ENCODE measurements at regions of chr3 and their contacts with region 1.

Region 1: GRCh38 chr3:122679085-122679881 is 1.4 kb upstream of the PARP14 start:
- DNase-seq: peak; percentile 71 to 92 (median 78)
- ATAC-seq: peak; percentile 68
- H3K4me3 ChIP-seq: peak overlapping the region; percentile 93
- H3K4me3 Mint-ChIP-seq: peak overlapping the region; percentile 93
- H3K27ac ChIP-seq: peak overlapping the region; percentile 88 to 91
- H3K27ac Mint-ChIP-seq: peak overlapping the region; percentile 96
- H3K4me1 ChIP-seq: peaks cover 46% of the 10 kb centered on the region
- H3K4me1 Mint-ChIP-seq: peaks cover 54% of the 10 kb centered on the region
- H3K27me3 ChIP-seq: no peaks in the 10 kb centered on the region
- H3K27me3 Mint-ChIP-seq: no peaks in the 10 kb centered on the region
- CTCF ChIP-seq: peak; percentile 83

Region 2: GRCh38 chr3:121606106-121606505 is 1073.2 kb before region 1 on chr3:
- CTCF ChIA-PET with region 1: no interaction called
- POLR2A ChIA-PET with region 1: no interaction called
- intact Hi-C with region 1: no loop called
- DNase-seq: no peak
- ATAC-seq: no peak
- H3K4me3 ChIP-seq: no peak overlapping the region
- H3K4me3 Mint-ChIP-seq: no peak overlapping the region
- H3K27ac ChIP-seq: no peak overlapping the region
- H3K27ac Mint-ChIP-seq: no peak overlapping the region
- H3K4me1 ChIP-seq: no peaks in the 10 kb centered on the region
- H3K4me1 Mint-ChIP-seq: no peaks in the 10 kb centered on the region
- H3K27me3 ChIP-seq: no peaks in the 10 kb centered on the region
- H3K27me3 Mint-ChIP-seq: no peaks in the 10 kb centered on the region
- CTCF ChIP-seq: no peak

Region 3: DNA sequence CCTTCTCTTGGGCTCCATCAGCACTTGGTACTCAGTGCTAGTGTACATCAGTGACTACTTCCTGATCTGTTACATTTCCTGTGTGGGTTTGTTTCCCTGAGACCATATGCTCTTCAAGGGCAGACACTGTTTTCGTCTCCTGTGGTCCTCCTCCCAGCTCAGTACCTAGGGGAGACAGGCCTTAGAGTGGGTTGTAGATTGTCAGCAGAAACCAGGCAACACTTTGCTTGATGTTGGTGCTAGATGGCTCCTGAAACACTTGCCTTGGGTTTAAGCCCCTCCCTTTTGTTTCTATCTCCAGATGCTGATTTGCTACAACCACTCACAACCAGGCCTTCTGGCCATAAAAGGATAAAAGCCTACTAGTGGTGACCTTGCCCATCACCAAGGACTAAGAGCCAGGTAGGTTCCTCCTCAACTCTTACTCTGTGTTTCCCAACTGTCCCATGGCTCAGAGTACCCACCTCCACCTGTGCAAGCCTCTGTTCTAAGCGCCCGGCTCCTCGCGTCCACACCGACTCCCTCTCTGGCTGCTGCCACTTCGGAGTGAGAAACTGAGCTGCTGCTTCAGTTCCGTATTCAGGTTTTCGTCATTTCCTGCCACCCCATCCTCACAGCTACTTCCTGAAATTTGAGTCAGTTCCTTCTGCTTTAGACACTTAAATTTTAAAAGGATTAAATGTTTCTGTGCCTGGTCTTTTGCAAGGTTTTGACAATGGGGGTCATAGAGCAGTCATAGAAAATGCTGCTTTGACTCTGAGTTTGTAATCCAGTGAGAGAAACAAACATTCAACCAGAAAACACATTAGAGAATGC is 1018.7 kb before region 1 on chr3 and contains the start of gene HCLS1:
- CTCF ChIA-PET with region 1: no interaction called
- POLR2A ChIA-PET with region 1: no interaction called
- intact Hi-C with region 1: loop called in 1 of 2 experiments (anchors 10 kb)
- DNase-seq: peak; percentile 46 to 89 (median 62)
- ATAC-seq: peak; percentile 83
- H3K4me3 ChIP-seq: peak within 1 kb of the TSS; percentile 61
- H3K4me3 Mint-ChIP-seq: peak within 1 kb of the TSS; percentile 94
- H3K27ac ChIP-seq: peak within 1 kb of the TSS; percentile 83 to 97
- H3K27ac Mint-ChIP-seq: peak within 1 kb of the TSS; percentile 96
- H3K4me1 ChIP-seq: peaks cover 48% of the 10 kb centered on the region
- H3K4me1 Mint-ChIP-seq: peaks cover 55% of the 10 kb centered on the region
- H3K27me3 ChIP-seq: no peaks in the 10 kb centered on the region
- H3K27me3 Mint-ChIP-seq: no peaks in the 10 kb centered on the region
- CTCF ChIP-seq: no peak
- total RNA-seq, gene HCLS1: 204 to 206 TPM

Region 4: GRCh38 chr3:122101646-122102045 is 577.6 kb before region 1 on chr3:
- CTCF ChIA-PET with region 1: no interaction called
- POLR2A ChIA-PET with region 1: no interaction called
- intact Hi-C with region 1: loop called in 1 of 2 experiments (anchors 10 kb)
- DNase-seq: peak in 4 of 14 experiments; percentile 11 to 76 (median 74)
- ATAC-seq: no peak
- H3K4me3 ChIP-seq: no peak overlapping the region
- H3K4me3 Mint-ChIP-seq: no peak overlapping the region
- H3K27ac ChIP-seq: no peak overlapping the region
- H3K27ac Mint-ChIP-seq: no peak overlapping the region
- H3K4me1 ChIP-seq: peaks cover 4% of the 10 kb centered on the region
- H3K4me1 Mint-ChIP-seq: peaks cover 16% of the 10 kb centered on the region
- H3K27me3 ChIP-seq: no peaks in the 10 kb centered on the region
- H3K27me3 Mint-ChIP-seq: no peaks in the 10 kb centered on the region
- CTCF ChIP-seq: peak; percentile 41

Region 5: GRCh38 chr3:122392868-122393844 is 286.1 kb before region 1 on chr3:
- CTCF ChIA-PET with region 1: interaction called, 16 read pairs
- POLR2A ChIA-PET with region 1: interaction called, 23 read pairs
- intact Hi-C with region 1: loop called (anchors 1 to 2 kb)
- DNase-seq: peak in 5 of 14 experiments; percentile 5 to 68 (median 64)
- ATAC-seq: peak; percentile 55
- H3K4me3 ChIP-seq: no peak overlapping the region
- H3K4me3 Mint-ChIP-seq: no peak overlapping the region
- H3K27ac ChIP-seq: no peak overlapping the region
- H3K27ac Mint-ChIP-seq: no peak overlapping the region
- H3K4me1 ChIP-seq: no peaks in the 10 kb centered on the region
- H3K4me1 Mint-ChIP-seq: peaks cover 10% of the 10 kb centered on the region
- H3K27me3 ChIP-seq: no peaks in the 10 kb centered on the region
- H3K27me3 Mint-ChIP-seq: no peaks in the 10 kb centered on the region
- CTCF ChIP-seq: peak; percentile 81

Region 6: DNA sequence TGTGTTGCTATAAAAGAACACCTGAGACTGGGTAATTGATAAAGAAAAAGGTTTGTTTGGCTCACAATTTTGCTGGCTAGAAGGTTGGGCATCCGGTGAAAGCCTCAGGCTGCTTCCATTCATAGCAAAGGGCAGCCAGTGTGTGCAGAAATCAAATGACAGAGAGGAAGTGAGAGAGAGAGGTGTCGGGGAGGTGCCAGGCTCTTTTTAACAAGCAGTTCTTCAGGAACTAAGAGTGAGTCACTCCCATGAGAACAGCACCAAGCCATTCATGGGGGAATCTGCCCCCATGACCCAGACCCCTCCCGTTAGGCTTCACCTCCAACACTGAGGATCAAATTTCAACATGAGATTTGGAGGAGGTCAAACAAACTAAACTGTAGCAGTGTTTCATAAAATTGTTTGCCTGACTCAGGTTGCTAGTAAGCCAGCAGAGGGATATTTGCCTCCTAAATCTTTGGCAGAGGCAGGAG is 106.3 kb before region 1 on chr3:
- CTCF ChIA-PET with region 1: interaction called, 4 read pairs
- POLR2A ChIA-PET with region 1: interaction called, 15 read pairs
- intact Hi-C with region 1: no loop called
- DNase-seq: peak in 7 of 14 experiments; percentile 4 to 74 (median 43)
- ATAC-seq: no peak
- H3K4me3 ChIP-seq: no peak overlapping the region
- H3K4me3 Mint-ChIP-seq: peak overlapping the region; percentile 50
- H3K27ac ChIP-seq: peak overlapping the region in 1 of 2 donors; percentile 38
- H3K27ac Mint-ChIP-seq: peak overlapping the region; percentile 67
- H3K4me1 ChIP-seq: peaks cover 37% of the 10 kb centered on the region
- H3K4me1 Mint-ChIP-seq: peaks cover 65% of the 10 kb centered on the region
- H3K27me3 ChIP-seq: no peaks in the 10 kb centered on the region
- H3K27me3 Mint-ChIP-seq: no peaks in the 10 kb centered on the region
- CTCF ChIP-seq: no peak

Measured in CD4-positive, alpha-beta T cell (primary cell).